ENCODE measurements at regions of chr12 and their contacts with region 1.

Region 1: GRCh38 chr12:53213348-53213747 is 6.3 kb upstream of the ITGB7 start:
- DNase-seq: peak; percentile 96
- H3K4me3 ChIP-seq: peak overlapping the region in 1 of 8 donors; percentile 11
- H3K27ac ChIP-seq: peak overlapping the region in 5 of 8 donors; percentile 46 to 98 (median 98)
- H3K4me1 ChIP-seq: peaks cover 57 to 99% (median 89%) of the 10 kb centered on the region in 6 donors
- H3K27me3 ChIP-seq: no peaks in the 10 kb centered on the region
- CTCF ChIP-seq: peak; percentile 85 to 95 (median 93)
- POLR2A ChIP-seq: no peak

Region 2: DNA sequence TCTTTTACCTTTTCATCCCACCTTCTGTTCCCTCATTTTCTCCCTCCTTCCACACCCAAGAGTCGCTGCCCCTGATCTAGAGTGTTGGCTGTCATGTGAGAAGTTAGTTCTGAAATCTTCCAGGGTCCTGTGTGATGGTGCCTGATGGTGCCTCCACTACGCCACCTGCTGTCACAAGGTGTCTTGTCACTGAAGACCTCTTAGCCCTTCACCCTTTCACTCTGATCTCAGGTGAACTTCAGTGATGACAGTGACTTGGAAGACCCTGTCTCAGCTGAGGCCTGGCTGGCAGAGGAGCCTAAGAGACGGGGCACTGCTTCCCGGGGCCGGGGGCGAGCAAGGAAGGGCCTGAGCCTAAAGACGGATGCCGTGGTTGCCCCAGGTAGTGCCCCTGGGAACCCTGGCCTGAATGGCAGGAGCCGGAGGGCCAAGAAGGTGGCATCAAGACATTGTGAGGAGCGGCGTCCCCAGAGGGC is 74.4 kb after region 1 on chr12:
- intact Hi-C with region 1: loop called (anchors 2 kb)
- DNase-seq: peak; percentile 91
- H3K4me3 ChIP-seq: no peak overlapping the region
- H3K27ac ChIP-seq: no peak overlapping the region
- H3K4me1 ChIP-seq: peaks cover 0 to 28% (median 6%) of the 10 kb centered on the region in 6 donors
- H3K27me3 ChIP-seq: no peaks in the 10 kb centered on the region
- CTCF ChIP-seq: peak; percentile 66 to 88 (median 78)
- POLR2A ChIP-seq: no peak

Measured in spleen (tissue), 13 donors.